ENCODE measurements at regions of chr15 and their contacts with region 1.

Region 1: GRCh38 chr15:60326824-60327654 is 70.7 kb downstream of the ANXA2 start:
- DNase-seq: peak; percentile 64
- ATAC-seq: peak; percentile 71
- H3K4me3 ChIP-seq: no peak overlapping the region
- H3K27ac ChIP-seq: no peak overlapping the region
- H3K4me1 ChIP-seq: no peaks in the 10 kb centered on the region
- H3K27me3 ChIP-seq: no peaks in the 10 kb centered on the region
- CTCF ChIP-seq: peak; percentile 88

Region 2: GRCh38 chr15:59725172-59725486 is 601.9 kb before region 1 on chr15:
- CTCF ChIA-PET with region 1: interaction called, 3 read pairs
- POLR2A ChIA-PET with region 1: no interaction called
- in situ Hi-C with region 1: no loop called
- intact Hi-C with region 1: loop called (anchors 1 kb)
- DNase-seq: no peak
- ATAC-seq: no peak
- H3K4me3 ChIP-seq: no peak overlapping the region
- H3K27ac ChIP-seq: no peak overlapping the region
- H3K4me1 ChIP-seq: no peaks in the 10 kb centered on the region
- H3K27me3 ChIP-seq: peaks cover 2% of the 10 kb centered on the region; the same call in 1 of the 2 replicates
- CTCF ChIP-seq: peak; percentile 65; the same call in 1 of the 2 replicates

Region 3: GRCh38 chr15:59997070-59997701 is 329.9 kb before region 1 on chr15:
- CTCF ChIA-PET with region 1: no interaction called
- POLR2A ChIA-PET with region 1: no interaction called
- in situ Hi-C with region 1: no loop called
- intact Hi-C with region 1: loop called (anchors 10 kb)
- DNase-seq: no peak
- ATAC-seq: peak; percentile 69
- H3K4me3 ChIP-seq: peak overlapping the region; percentile 35 to 49
- H3K27ac ChIP-seq: no peak overlapping the region
- H3K4me1 ChIP-seq: peaks cover 16% of the 10 kb centered on the region
- H3K27me3 ChIP-seq: peaks cover 61% of the 10 kb centered on the region
- CTCF ChIP-seq: no peak

Region 4: DNA sequence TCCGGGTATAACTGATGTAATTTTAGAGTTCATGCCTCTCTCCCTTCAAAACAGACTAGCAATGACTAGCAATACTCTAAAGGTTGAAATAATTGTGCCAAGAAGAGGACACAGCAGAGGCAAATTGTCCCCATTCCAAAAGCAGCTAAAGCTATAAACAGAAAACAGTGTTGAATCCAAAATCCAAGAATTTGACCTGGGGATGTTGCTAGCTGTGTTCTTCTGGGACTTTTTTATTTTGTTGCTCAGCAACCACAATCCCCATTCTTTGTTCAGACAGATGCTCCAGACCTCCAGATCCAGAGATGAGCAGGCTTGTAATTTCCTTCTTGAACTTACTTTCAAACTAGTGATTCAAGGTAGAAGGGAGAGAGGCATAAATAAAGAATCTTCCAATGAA is 131.4 kb before region 1 on chr15:
- CTCF ChIA-PET with region 1: interaction called, 3 read pairs
- POLR2A ChIA-PET with region 1: no interaction called
- in situ Hi-C with region 1: no loop called
- intact Hi-C with region 1: loop called (anchors 5 kb)
- DNase-seq: no peak
- ATAC-seq: no peak
- H3K4me3 ChIP-seq: no peak overlapping the region
- H3K27ac ChIP-seq: no peak overlapping the region
- H3K4me1 ChIP-seq: no peaks in the 10 kb centered on the region
- H3K27me3 ChIP-seq: peaks cover 8% of the 10 kb centered on the region
- CTCF ChIP-seq: no peak

Region 5: GRCh38 chr15:61195116-61196002 is 868.3 kb after region 1 on chr15:
- CTCF ChIA-PET with region 1: no interaction called
- POLR2A ChIA-PET with region 1: no interaction called
- in situ Hi-C with region 1: no loop called
- intact Hi-C with region 1: no loop called
- DNase-seq: peak; percentile 39
- ATAC-seq: peak; percentile 88
- H3K4me3 ChIP-seq: no peak overlapping the region
- H3K27ac ChIP-seq: no peak overlapping the region
- H3K4me1 ChIP-seq: no peaks in the 10 kb centered on the region
- H3K27me3 ChIP-seq: peaks cover 7% of the 10 kb centered on the region; the same call in 1 of the 2 replicates
- CTCF ChIP-seq: peak; percentile 83

Region 6: DNA sequence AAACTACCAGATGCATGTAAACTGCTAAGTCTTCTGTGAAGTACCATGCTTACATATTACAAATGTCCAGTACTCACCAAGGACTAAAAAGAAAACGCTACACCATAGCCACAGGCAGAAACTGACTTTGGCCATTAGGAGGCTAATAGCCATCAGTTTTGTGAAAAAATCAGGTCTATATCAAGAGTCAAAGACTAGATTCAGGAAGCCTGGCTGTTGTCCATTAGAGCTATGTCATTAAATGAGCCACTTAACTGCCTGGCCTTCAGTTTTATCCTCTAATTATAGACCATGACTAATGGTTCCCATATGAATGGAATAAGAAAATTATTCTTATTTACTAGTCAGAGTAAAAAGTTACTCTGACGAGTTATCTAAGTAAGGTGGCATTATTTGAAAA is 1589.1 kb after region 1 on chr15:
- CTCF ChIA-PET with region 1: no interaction called
- POLR2A ChIA-PET with region 1: no interaction called
- in situ Hi-C with region 1: no loop called
- intact Hi-C with region 1: no loop called
- DNase-seq: no peak
- ATAC-seq: no peak
- H3K4me3 ChIP-seq: no peak overlapping the region
- H3K27ac ChIP-seq: no peak overlapping the region
- H3K4me1 ChIP-seq: no peaks in the 10 kb centered on the region
- H3K27me3 ChIP-seq: no peaks in the 10 kb centered on the region
- CTCF ChIP-seq: no peak